GM13976 (cell line): ENCODE measurements at regions of chrX and their contacts with region 1.

Region 1: GRCh38 chrX:55907968-55908607 is 190.5 kb downstream of the RRAGB start:
- DNase-seq: peak; percentile 58
- CTCF ChIP-seq: peak; percentile 33

Region 2: DNA sequence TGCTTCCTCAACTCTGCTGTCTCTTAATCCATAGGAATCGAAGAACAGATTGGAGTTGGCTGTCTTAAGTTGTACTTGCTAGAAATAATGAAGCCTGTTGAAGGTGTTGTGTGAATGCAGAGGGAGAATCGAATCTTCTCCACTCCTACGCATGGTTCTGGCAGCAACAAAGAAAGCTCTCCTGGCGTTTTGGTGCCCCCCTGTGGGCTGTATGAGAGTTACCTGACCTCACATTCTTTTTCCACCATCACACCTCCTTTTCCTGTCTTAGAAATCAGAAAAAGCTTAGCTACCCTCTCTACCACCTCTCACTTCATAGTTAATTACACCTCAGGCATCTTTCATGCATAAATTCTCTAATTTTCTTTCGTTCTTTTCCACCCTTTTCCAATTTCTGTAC is 340.4 kb after region 1 on chrX:
- in situ Hi-C with region 1: loop called (anchors 25 kb)
- DNase-seq: peak; percentile 53
- CTCF ChIP-seq: peak; percentile 65